Activated CD4-positive, alpha-beta memory T cell treated with anti-CD3 and anti-CD28 coated beads, Interleukin-2, amount 10 ng/mL, durations not matched to agents 7 days and 5 days (primary cell): ENCODE measurements at regions of chr17 and their contacts with region 1.

Region 1: GRCh38 chr17:31487648-31488263 is 96.3 kb downstream of the RAB11FIP4 start:
- DNase-seq: peak; percentile 94
- H3K4me3 Mint-ChIP-seq: peak overlapping the region; percentile 76
- H3K27ac Mint-ChIP-seq: peak overlapping the region; percentile 67
- H3K4me1 Mint-ChIP-seq: peaks cover 50% of the 10 kb centered on the region
- H3K27me3 Mint-ChIP-seq: peaks cover 3% of the 10 kb centered on the region

Region 2: GRCh38 chr17:31313982-31314784 is 173.6 kb before region 1 on chr17 and contains the start of gene EVI2B:
- CTCF ChIA-PET with region 1: no interaction called
- POLR2A ChIA-PET with region 1: interaction called, 10 read pairs
- DNase-seq: no peak
- H3K4me3 Mint-ChIP-seq: peak within 1 kb of the TSS; percentile 83
- H3K27ac Mint-ChIP-seq: peak within 1 kb of the TSS; percentile 88
- H3K4me1 Mint-ChIP-seq: peaks cover 44% of the 10 kb centered on the region
- H3K27me3 Mint-ChIP-seq: no peaks in the 10 kb centered on the region
- total RNA-seq, gene EVI2B: 109 TPM

Region 3: DNA sequence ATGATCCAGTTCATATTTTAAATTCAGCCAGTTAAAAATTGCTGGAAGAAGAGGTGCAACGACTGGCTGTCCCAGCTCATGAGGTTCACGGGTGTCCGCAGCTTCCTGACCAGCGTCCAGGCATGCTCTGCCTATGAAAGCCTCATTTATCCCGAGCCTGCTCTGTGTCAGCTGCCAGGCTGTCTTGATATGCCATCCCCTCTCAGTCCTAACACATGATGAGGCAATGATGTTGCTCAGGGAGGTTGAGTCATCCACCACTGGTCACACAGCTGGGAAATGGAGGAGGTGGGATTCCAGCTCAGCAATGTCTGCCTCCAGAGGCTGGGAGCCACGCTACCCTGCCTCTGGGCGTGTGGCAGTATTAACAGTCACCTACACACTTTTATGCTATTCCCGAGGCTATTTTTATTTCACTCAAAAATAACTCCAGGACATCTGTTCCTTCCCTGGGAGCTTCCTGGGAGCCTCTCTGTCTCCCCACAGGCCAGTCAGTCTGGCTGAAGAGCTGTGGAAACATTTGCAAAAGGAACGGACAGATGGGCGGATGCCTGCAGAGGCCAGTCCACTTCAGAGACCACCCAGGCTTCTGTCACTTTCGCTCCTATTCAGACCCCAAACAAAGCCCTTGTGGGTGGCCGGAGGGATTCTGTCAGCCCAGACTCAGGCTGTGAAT is 73.7 kb before region 1 on chr17:
- CTCF ChIA-PET with region 1: no interaction called
- POLR2A ChIA-PET with region 1: no interaction called
- DNase-seq: no peak
- H3K4me3 Mint-ChIP-seq: no peak overlapping the region
- H3K27ac Mint-ChIP-seq: no peak overlapping the region
- H3K4me1 Mint-ChIP-seq: no peaks in the 10 kb centered on the region
- H3K27me3 Mint-ChIP-seq: no peaks in the 10 kb centered on the region